ENCODE measurements at regions of chr12 and their contacts with region 1.

Region 1: DNA sequence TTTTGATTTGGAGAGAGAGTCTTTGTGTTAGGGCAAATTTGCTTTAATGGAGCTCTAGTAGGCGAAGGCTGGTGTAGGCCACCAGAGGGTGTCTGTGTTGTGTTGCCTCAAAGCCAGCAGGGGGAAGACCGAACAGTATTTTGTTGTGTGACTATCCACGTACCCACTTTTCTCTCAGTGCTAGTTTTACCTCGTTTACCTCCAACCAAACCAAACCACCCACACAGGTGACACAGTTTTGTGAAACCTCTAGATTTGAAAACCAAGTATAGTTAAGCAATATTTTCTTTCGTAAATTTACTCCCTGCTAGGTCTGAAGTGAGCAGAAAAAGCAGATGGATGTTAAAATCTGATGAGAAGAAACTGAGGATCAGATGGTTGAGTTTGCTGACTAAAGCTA is 36.3 kb upstream of the NPFF start:
- DNase-seq: peak; percentile 61 to 76
- H3K4me3 ChIP-seq: no peak overlapping the region
- H3K27ac ChIP-seq: peak overlapping the region; percentile 57 to 63
- H3K4me1 ChIP-seq: peaks cover 0 to 19% (median 5%) of the 10 kb centered on the region in 4 donors
- H3K27me3 ChIP-seq: no peaks in the 10 kb centered on the region
- CTCF ChIP-seq: peak; percentile 80 to 96

Region 2: DNA sequence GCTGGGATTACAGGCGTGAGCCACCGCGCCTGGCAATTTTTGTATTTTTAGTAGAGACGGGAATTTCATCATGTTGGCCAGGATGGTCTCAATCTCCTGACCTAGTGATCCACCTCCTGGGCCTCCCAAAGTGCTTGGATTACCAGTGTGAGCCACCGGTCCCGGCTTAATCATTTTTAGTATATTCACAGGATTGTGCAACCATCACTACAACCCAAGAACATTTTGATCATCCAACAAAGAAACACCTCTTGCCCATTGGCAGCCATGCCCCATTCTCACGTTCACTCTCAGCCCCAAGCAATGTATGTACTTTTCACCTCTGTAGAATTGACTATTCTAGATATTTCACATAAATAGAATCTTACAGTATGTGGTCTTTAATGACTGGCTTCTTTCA is 143.6 kb before region 1 on chr12:
- intact Hi-C with region 1: no loop called
- DNase-seq: no peak
- H3K4me3 ChIP-seq: no peak overlapping the region
- H3K27ac ChIP-seq: no peak overlapping the region
- H3K4me1 ChIP-seq: peaks cover 0 to 17% (median 6%) of the 10 kb centered on the region in 4 donors
- H3K27me3 ChIP-seq: no peaks in the 10 kb centered on the region
- CTCF ChIP-seq: no peak

Region 3: DNA sequence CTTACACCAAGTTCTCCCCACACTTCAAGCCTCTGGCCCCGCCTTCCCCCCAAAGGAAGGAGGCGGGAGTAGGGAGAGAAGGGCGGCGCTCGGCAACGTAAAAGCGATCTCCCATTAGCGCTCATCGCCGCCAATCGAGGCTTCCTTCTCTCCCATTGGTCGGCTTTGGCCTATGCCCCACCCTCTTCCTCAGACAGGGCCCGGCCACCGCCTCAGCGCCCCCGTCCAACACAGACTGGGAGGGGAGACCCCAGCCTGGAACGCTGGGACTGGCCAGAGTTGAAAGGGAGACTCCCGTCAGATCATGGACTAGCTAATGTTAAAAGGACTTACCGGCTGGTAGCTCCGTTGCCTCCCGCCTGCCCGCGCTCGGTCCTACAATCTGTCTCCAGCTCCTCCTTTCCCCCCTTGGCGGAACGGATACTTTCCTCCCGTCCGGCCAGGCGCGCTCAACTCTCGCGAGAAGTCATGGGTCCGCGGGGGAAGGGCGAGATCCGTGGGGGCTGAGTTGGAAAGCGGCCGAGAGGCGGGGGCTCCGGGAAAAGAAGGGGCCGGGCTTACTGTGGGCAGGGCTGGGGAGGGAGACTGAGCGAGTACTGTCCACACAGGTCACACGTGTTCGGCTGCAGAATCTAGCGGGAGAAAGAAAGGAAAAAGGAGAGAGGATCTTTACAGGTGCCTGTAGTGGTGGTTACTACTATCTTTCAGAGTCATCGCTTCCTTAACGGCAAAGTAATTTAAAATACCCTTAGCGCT is 82.6 kb after region 1 on chr12 and contains the start of gene ATF7:
- intact Hi-C with region 1: loop called (anchors 10 kb)
- DNase-seq: peak; percentile 98 to 99
- H3K4me3 ChIP-seq: peak within 1 kb of the TSS; percentile 58 to 63
- H3K27ac ChIP-seq: peak within 1 kb of the TSS; percentile 86 to 89
- H3K4me1 ChIP-seq: peaks cover 0 to 47% (median 20%) of the 10 kb centered on the region in 4 donors
- H3K27me3 ChIP-seq: no peaks in the 10 kb centered on the region
- CTCF ChIP-seq: peak in 1 of 2 experiments; percentile 16

Region 4: DNA sequence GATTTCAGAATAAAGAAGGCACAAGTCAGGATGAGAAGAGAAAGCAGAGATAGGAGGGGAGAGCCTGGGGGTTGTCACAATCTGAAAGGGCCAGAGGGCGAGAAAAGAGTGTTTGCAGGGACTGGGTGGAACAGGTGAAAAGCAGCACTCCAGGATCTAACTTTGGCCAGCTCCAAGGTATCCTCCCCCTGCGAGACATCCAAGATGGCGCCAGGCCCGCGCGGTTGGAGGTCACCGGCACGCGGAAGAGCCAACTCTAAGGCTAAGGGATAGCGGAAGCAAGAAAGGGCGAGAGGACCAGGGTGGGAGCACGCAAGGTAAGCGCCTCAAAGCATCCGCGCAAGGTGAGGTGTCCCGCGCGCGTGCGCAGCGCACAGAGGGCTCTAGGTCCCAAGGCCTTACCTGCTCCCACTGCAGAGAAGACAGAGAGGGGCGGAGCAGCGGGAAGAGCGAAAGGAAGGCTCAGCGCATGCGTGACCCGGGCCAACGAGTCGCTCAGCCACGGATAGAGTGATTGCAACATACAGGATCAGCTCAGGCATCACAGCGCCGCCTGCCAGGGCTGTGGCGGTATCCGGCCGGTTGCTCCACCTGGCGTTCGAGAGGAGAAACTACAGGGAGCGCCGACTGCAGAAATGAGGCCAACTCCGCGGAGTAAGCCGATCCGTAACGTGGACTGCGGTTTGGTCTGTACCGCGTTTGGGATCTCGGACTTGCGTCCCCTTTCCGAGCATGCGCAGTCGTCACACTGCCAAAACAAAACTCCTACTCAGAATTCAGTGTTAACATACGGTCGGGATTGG is 132.3 kb after region 1 on chr12 and contains the start of gene ATP5MC2:
- intact Hi-C with region 1: loop called (anchors 5 kb)
- DNase-seq: peak; percentile 97 to 99
- H3K4me3 ChIP-seq: peak within 1 kb of the TSS; percentile 59 to 71
- H3K27ac ChIP-seq: peak within 1 kb of the TSS; percentile 90 to 99
- H3K4me1 ChIP-seq: peaks cover 0 to 43% (median 28%) of the 10 kb centered on the region in 4 donors
- H3K27me3 ChIP-seq: no peaks in the 10 kb centered on the region
- CTCF ChIP-seq: peak; percentile 97 to 100

Region 5: DNA sequence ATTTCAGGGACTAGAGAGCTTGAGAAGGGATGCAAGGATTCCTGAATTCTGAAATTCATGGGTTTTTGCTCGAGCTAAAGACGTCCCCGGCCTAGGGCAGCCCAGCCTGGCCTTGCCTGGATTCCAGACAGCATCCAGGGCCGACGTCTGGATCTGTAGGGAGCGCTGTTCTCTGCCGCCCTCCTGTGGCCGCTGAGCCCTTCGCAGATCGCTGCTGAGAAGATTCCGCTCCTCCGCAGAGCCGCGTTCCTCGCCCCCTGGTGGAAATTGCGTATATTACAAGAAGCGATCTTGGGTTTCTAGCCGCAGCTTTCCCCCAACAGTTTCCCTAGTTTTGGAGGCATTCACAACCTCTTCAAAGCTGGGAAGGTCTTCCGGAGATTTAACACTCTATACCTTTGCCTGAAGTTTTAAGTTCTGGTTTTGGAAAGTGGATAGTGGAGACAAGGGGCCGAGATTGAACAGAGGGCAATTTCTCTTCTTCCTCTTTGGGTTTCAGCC is 203.1 kb after region 1 on chr12:
- intact Hi-C with region 1: loop called (anchors 5 kb)
- DNase-seq: peak; percentile 90 to 96
- H3K4me3 ChIP-seq: no peak overlapping the region
- H3K27ac ChIP-seq: no peak overlapping the region
- H3K4me1 ChIP-seq: peaks cover 0 to 21% (median 12%) of the 10 kb centered on the region in 4 donors
- H3K27me3 ChIP-seq: peaks cover 0 to 59% of the 10 kb centered on the region in 2 donors
- CTCF ChIP-seq: peak; percentile 100